GM12878 (cell line): ENCODE measurements at regions of chr2 and their contacts with region 1.

Region 1: DNA sequence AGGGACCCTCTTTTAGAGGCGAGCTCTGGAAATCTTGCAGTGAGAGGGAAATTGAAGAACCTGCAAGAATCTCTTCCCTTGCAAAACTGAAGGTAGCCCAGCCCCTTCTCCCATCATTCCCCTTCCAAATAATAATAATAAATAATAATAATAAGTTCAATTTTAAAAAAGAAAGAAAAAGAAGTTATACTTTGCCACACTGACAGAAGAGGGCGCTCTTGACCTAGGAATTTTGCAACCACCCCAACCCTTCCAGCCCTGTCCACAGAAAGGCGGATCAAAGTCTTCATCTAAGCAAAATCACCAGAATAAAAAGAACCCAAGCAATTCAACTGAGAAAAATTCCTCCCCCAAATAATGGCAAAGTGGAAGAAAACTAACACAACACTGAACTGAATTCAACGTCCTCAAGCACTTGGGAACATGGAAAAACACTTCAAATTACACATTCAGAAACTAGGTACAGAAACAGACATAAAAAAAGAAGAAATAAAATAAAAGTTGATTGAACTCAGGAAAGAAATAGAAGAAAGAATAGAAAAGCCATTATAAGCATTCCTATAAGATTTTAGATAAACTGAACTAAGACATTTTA is 98.9 kb upstream of the GLS start:
- DNase-seq: peak; percentile 12
- ATAC-seq: peak; percentile 86
- H3K4me3 ChIP-seq: no peak overlapping the region
- H3K27ac ChIP-seq: no peak overlapping the region
- H3K4me1 ChIP-seq: no peaks in the 10 kb centered on the region
- H3K27me3 ChIP-seq: no peaks in the 10 kb centered on the region
- CTCF ChIP-seq: peak; percentile 29 to 55 (median 54); a peak in 4 of 6 replicates
- EP300 ChIP-seq: no peak
- POLR2A ChIP-seq: no peak
- RAD21 ChIP-seq: peak; percentile 85

Region 2: DNA sequence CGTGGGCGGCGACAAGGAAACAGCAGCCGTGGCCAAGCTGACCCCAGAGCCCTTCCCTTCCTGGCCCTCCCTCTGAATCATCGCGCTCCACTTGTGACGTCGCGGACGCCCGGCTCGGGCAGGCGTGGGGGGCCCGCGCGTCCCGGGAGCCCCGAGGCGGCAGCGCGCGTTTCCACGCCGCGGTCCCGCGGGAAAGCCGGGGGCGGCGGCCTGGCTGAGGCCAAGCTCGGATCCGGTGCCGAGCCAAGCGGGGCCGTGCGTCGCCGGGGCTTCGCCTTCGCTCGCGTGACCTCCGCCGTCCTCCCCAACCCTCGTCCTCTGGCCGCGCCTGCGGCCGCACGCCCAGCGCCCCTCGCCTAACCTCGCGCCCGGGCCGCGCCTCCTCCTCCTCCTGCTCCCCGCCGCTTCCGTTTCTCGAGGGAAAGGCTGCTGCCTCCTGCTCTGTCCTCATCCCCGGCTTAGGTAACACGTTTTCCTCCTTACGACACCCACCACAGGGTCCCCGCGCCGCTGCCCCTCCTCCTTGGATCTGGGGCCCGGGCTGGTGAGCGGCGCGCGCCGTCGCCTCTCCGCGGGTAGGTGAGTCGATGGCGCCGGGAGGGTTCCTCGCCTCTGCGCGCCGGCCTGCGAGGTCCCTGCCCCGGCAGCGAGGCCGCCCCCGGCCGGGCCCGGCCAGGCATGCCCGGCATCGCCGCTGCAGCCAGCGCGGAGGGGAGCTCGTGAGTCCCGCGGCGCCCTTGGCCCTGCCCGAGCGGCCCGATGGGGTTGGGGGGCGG is 438.0 kb before region 1 on chr2 and contains the start of gene INPP1:
- CTCF ChIA-PET with region 1: interaction called, 12 read pairs
- POLR2A ChIA-PET with region 1: no interaction called
- RAD21 ChIA-PET with region 1: no interaction called
- SMC1A ChIA-PET with region 1: no interaction called
- in situ Hi-C with region 1: no loop called
- intact Hi-C with region 1: no loop called
- DNase-seq: no peak
- ATAC-seq: peak; percentile 83
- H3K4me3 ChIP-seq: peak within 1 kb of the TSS; percentile 77
- H3K27ac ChIP-seq: peak within 1 kb of the TSS; percentile 44; the same call in 1 of the 2 replicates
- H3K4me1 ChIP-seq: peaks cover 8% of the 10 kb centered on the region; the same call in 1 of the 2 replicates
- H3K27me3 ChIP-seq: no peaks in the 10 kb centered on the region
- CTCF ChIP-seq: no peak
- EP300 ChIP-seq: 0 out of 4 replicates have a peak, but pooled peaks of 1 of the 2 experiments have one; percentile 17
- POLR2A ChIP-seq: peak; percentile 53
- RAD21 ChIP-seq: no peak
- polyA plus RNA-seq, gene INPP1: 3.3 to 8.9 TPM

Region 3: DNA sequence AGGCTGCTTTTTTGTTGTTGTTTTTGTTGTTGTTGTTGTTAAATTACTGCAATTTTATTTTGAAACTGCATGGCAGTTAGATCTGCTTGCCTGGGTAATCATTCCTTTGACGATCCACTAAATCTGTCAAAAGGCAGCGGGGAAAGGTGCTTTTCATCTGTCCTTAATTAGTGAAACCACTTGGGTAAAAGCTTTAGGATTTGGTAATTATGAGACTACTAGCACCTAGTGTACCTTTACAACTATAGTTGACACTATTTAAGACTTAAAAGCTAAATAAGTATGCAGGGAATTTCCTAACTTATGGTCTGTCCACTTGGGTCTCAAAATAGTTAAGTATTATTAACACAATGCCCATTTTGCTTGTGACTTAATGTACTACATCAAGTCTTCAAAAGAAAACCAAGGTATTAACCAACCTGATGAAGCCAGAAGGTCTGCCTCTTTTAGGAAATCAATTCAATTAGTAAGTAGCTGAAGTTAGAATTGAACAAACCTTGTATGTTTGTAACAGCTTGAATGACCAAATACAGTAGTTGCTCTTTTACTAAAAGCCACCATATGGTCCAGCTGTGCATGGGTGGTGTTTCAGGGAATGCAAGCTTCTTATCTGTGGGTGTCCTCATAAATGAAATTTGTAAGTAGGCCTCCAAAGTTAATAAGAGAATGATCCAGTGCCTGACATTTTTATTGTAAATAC is 88.0 kb before region 1 on chr2:
- CTCF ChIA-PET with region 1: interaction called, 13 read pairs
- POLR2A ChIA-PET with region 1: no interaction called
- RAD21 ChIA-PET with region 1: no interaction called
- SMC1A ChIA-PET with region 1: interaction called, 11 read pairs
- in situ Hi-C with region 1: no loop called
- intact Hi-C with region 1: no loop called
- DNase-seq: no peak
- ATAC-seq: peak; percentile 71
- H3K4me3 ChIP-seq: no peak overlapping the region
- H3K27ac ChIP-seq: peak overlapping the region; percentile 46
- H3K4me1 ChIP-seq: peaks cover 18% of the 10 kb centered on the region
- H3K27me3 ChIP-seq: no peaks in the 10 kb centered on the region
- CTCF ChIP-seq: no peak
- EP300 ChIP-seq: peak; percentile 13 to 58; a peak in 3 of 4 replicates
- POLR2A ChIP-seq: no peak
- RAD21 ChIP-seq: no peak

Region 4: DNA sequence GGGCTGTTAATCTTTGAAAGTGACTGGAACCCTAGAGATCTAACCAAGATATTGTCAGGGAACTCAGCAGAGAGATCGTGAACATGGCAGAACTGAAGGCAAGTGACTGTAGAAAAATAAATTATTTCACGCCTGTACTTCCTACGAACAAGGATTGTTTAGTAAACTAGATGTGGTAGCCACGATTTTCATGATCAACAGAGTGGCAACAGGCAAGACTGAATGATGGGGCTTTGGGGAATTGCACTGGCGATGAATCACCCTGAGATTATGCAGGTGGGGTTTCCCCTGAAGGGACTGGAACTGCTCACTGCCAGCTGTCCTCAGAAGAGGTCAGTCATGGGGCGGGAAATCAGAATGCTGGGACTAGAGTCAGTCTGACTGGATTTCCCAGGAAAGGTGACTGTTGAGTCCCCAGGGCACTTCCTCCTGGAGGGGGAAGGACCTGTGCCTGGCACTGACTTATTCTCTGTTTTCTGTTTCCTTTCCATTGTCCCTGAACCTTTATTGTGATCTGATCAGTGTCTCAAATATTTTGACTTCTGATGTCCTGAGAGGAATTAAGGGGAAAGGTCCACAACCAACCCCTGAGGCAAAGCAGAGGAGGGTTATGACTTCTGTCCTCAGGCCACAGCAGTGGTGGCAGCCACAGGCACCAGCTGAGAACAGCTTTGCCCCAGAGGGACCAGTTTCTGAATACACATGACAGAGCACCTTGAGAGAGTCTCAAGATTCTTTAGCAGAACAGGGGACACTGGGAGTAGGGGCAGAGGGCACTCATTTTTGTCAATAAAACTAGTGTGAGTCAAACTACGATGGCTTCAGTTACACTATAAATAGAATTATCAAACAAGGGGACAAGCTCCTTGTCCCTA is 62.8 kb before region 1 on chr2:
- CTCF ChIA-PET with region 1: interaction called, 5 read pairs
- POLR2A ChIA-PET with region 1: no interaction called
- RAD21 ChIA-PET with region 1: interaction called, 6 read pairs
- SMC1A ChIA-PET with region 1: interaction called, 18 read pairs
- in situ Hi-C with region 1: no loop called
- intact Hi-C with region 1: no loop called
- DNase-seq: peak; percentile 68
- ATAC-seq: peak; percentile 81
- H3K4me3 ChIP-seq: no peak overlapping the region
- H3K27ac ChIP-seq: peak overlapping the region; percentile 57
- H3K4me1 ChIP-seq: peaks cover 41% of the 10 kb centered on the region
- H3K27me3 ChIP-seq: no peaks in the 10 kb centered on the region
- CTCF ChIP-seq: peak in 1 of 3 experiments; percentile 19; a peak in 1 of 6 replicates
- EP300 ChIP-seq: peak; percentile 71 to 75; a peak in 3 of 4 replicates
- POLR2A ChIP-seq: 0 out of 2 replicates have a peak, but pooled peaks have one; percentile 38
- RAD21 ChIP-seq: peak; percentile 32; the same call in 1 of the 2 replicates

Region 5: GRCh38 chr2:190765386-190766173 is 16.1 kb before region 1 on chr2:
- CTCF ChIA-PET with region 1: interaction called, 29 read pairs
- POLR2A ChIA-PET with region 1: interaction called, 4 read pairs
- RAD21 ChIA-PET with region 1: interaction called, 7 read pairs
- SMC1A ChIA-PET with region 1: interaction called, 17 read pairs
- in situ Hi-C with region 1: no loop called
- intact Hi-C with region 1: no loop called
- DNase-seq: no peak
- ATAC-seq: no peak
- H3K4me3 ChIP-seq: no peak overlapping the region
- H3K27ac ChIP-seq: no peak overlapping the region
- H3K4me1 ChIP-seq: no peaks in the 10 kb centered on the region
- H3K27me3 ChIP-seq: no peaks in the 10 kb centered on the region; a peak in 1 of 4 replicates
- CTCF ChIP-seq: no peak
- EP300 ChIP-seq: no peak
- POLR2A ChIP-seq: no peak
- RAD21 ChIP-seq: no peak

Region 6: DNA sequence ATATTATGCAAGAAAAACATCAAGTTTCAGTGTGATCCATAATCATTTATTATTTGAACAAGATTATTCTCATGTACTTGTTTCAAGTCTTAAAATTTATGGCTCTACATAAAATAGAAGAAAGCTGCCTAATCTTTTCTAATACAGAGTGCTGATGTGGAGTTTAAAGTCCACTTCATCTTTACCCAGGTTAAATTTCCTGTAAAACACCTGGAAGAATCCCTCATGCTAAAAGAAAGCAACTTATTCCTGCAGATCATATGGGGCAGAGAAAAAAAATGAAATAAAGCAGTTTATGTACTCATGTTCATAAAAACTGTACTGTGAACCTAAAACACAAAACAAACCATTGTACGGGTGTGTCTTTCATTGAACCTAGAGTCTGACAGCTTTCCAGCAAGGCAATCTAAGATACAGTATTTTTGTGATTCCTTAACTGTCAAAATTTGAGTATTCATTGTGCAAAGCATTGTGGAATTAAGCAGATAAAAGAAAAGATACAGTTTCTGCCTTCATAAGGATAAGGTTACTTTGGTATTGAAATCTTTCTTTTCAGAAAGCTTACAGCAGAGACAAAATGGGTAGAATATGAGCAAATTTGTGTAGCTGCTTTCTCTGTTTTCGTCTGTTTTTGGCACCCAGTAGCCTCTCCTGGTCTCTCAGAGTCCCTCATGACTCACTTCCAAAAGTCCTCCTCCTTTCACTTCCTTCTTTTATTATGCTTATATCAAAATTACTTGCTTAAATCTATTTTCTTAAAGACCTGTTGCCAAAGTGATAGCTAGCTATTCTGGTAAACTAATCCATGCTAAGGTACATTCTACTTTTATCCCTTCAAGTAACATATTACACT is 72.1 kb after region 1 on chr2:
- CTCF ChIA-PET with region 1: interaction called, 15 read pairs
- POLR2A ChIA-PET with region 1: no interaction called
- RAD21 ChIA-PET with region 1: interaction called, 6 read pairs
- SMC1A ChIA-PET with region 1: interaction called, 10 read pairs
- in situ Hi-C with region 1: no loop called
- intact Hi-C with region 1: no loop called
- DNase-seq: no peak
- ATAC-seq: peak; percentile 74
- H3K4me3 ChIP-seq: no peak overlapping the region
- H3K27ac ChIP-seq: no peak overlapping the region
- H3K4me1 ChIP-seq: no peaks in the 10 kb centered on the region
- H3K27me3 ChIP-seq: no peaks in the 10 kb centered on the region
- CTCF ChIP-seq: no peak
- EP300 ChIP-seq: no peak
- POLR2A ChIP-seq: no peak
- RAD21 ChIP-seq: no peak

Region 7: GRCh38 chr2:190927301-190927700 is 145.6 kb after region 1 on chr2:
- CTCF ChIA-PET with region 1: no interaction called
- POLR2A ChIA-PET with region 1: no interaction called
- RAD21 ChIA-PET with region 1: no interaction called
- SMC1A ChIA-PET with region 1: no interaction called
- in situ Hi-C with region 1: no loop called
- intact Hi-C with region 1: no loop called
- DNase-seq: no peak
- ATAC-seq: no peak
- H3K4me3 ChIP-seq: no peak overlapping the region
- H3K27ac ChIP-seq: no peak overlapping the region
- H3K4me1 ChIP-seq: no peaks in the 10 kb centered on the region
- H3K27me3 ChIP-seq: no peaks in the 10 kb centered on the region
- CTCF ChIP-seq: no peak
- EP300 ChIP-seq: no peak
- POLR2A ChIP-seq: no peak
- RAD21 ChIP-seq: no peak

Region 8: GRCh38 chr2:191030521-191031154 is 248.9 kb after region 1 on chr2:
- CTCF ChIA-PET with region 1: interaction called, 15 read pairs
- POLR2A ChIA-PET with region 1: no interaction called
- RAD21 ChIA-PET with region 1: no interaction called
- SMC1A ChIA-PET with region 1: interaction called, 6 read pairs
- in situ Hi-C with region 1: no loop called
- intact Hi-C with region 1: loop called (anchors 2 kb)
- DNase-seq: no peak
- ATAC-seq: peak; percentile 96
- H3K4me3 ChIP-seq: no peak overlapping the region
- H3K27ac ChIP-seq: no peak overlapping the region
- H3K4me1 ChIP-seq: no peaks in the 10 kb centered on the region
- H3K27me3 ChIP-seq: no peaks in the 10 kb centered on the region
- CTCF ChIP-seq: peak; percentile 62 to 73 (median 69)
- EP300 ChIP-seq: no peak
- POLR2A ChIP-seq: no peak
- RAD21 ChIP-seq: peak; percentile 65